PC-3 (cell line): ENCODE measurements at regions of chr15 and their contacts with region 1.

Region 1: GRCh38 chr15:44102675-44103254 is 92.3 kb downstream of the FRMD5 start:
- DNase-seq: peak; percentile 99
- ATAC-seq: peak; percentile 93
- H3K4me3 ChIP-seq: peak overlapping the region; percentile 39; the same call in 1 of the 2 replicates
- H3K27ac ChIP-seq: peak overlapping the region; percentile 96
- H3K4me1 ChIP-seq: peaks cover 35% of the 10 kb centered on the region
- H3K27me3 ChIP-seq: no peaks in the 10 kb centered on the region
- CTCF ChIP-seq: no peak

Region 2: GRCh38 chr15:44066316-44066740 is 36.4 kb before region 1 on chr15:
- CTCF ChIA-PET with region 1: interaction called, 3 read pairs
- POLR2A ChIA-PET with region 1: no interaction called
- intact Hi-C with region 1: loop called (anchors 2 kb)
- DNase-seq: peak; percentile 86
- ATAC-seq: peak; percentile 62
- H3K4me3 ChIP-seq: peak overlapping the region; percentile 7; the same call in 1 of the 2 replicates
- H3K27ac ChIP-seq: no peak overlapping the region
- H3K4me1 ChIP-seq: peaks cover 14% of the 10 kb centered on the region; the same call in 1 of the 2 replicates
- H3K27me3 ChIP-seq: no peaks in the 10 kb centered on the region
- CTCF ChIP-seq: peak; percentile 98

Region 3: DNA sequence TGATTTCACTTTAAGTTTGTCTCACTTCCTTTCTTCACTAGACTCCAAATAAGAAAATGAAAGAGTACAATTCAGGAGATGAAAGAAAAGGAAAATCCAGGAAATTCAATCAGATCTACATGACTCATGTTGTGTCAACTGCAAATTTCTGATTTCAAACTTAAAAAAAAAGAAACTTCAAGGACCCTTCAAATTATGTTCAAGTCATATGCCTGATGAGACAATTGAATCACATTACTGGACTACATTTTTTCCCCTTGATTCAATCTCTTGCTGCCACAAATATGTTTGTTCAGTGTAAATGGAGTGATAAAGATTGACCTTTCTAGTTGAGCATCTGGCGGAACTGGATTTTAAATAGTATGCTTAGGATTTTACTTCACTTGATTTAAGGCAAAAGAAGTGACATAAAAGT is 54.9 kb after region 1 on chr15:
- CTCF ChIA-PET with region 1: no interaction called
- POLR2A ChIA-PET with region 1: no interaction called
- intact Hi-C with region 1: loop called (anchors 5 kb)
- DNase-seq: peak; percentile 97
- ATAC-seq: peak; percentile 90
- H3K4me3 ChIP-seq: peak overlapping the region; percentile 49; the same call in 1 of the 2 replicates
- H3K27ac ChIP-seq: peak overlapping the region; percentile 93
- H3K4me1 ChIP-seq: peaks cover 39% of the 10 kb centered on the region
- H3K27me3 ChIP-seq: no peaks in the 10 kb centered on the region
- CTCF ChIP-seq: no peak

Region 4: GRCh38 chr15:44195151-44195740 is 92.5 kb after region 1 on chr15 and contains the start of gene FRMD5:
- CTCF ChIA-PET with region 1: interaction called, 3 read pairs
- POLR2A ChIA-PET with region 1: no interaction called
- intact Hi-C with region 1: loop called (anchors 2 kb)
- DNase-seq: peak; percentile 98
- ATAC-seq: peak; percentile 84
- H3K4me3 ChIP-seq: peak within 1 kb of the TSS; percentile 81
- H3K27ac ChIP-seq: peak within 1 kb of the TSS; percentile 51
- H3K4me1 ChIP-seq: peaks cover 30% of the 10 kb centered on the region
- H3K27me3 ChIP-seq: no peaks in the 10 kb centered on the region
- CTCF ChIP-seq: peak; percentile 37; the same call in 1 of the 2 replicates
- total RNA-seq, gene FRMD5: 8.7 and 12.2 TPM in 2 replicates

Region 5: GRCh38 chr15:44286814-44287452 is 184.2 kb after region 1 on chr15:
- CTCF ChIA-PET with region 1: no interaction called
- POLR2A ChIA-PET with region 1: no interaction called
- intact Hi-C with region 1: loop called (anchors 1 kb)
- DNase-seq: peak; percentile 22
- ATAC-seq: no peak
- H3K4me3 ChIP-seq: peak overlapping the region; percentile 87
- H3K27ac ChIP-seq: no peak overlapping the region
- H3K4me1 ChIP-seq: peaks cover 16% of the 10 kb centered on the region
- H3K27me3 ChIP-seq: no peaks in the 10 kb centered on the region
- CTCF ChIP-seq: no peak

Region 6: GRCh38 chr15:44325568-44325967 is 222.8 kb after region 1 on chr15:
- CTCF ChIA-PET with region 1: no interaction called
- POLR2A ChIA-PET with region 1: no interaction called
- intact Hi-C with region 1: no loop called
- DNase-seq: no peak
- ATAC-seq: no peak
- H3K4me3 ChIP-seq: no peak overlapping the region
- H3K27ac ChIP-seq: no peak overlapping the region
- H3K4me1 ChIP-seq: no peaks in the 10 kb centered on the region
- H3K27me3 ChIP-seq: no peaks in the 10 kb centered on the region
- CTCF ChIP-seq: no peak

Region 7: GRCh38 chr15:44340410-44340809 is 237.6 kb after region 1 on chr15:
- CTCF ChIA-PET with region 1: no interaction called
- POLR2A ChIA-PET with region 1: no interaction called
- intact Hi-C with region 1: no loop called
- DNase-seq: peak; percentile 95
- ATAC-seq: peak; percentile 100
- H3K4me3 ChIP-seq: no peak overlapping the region
- H3K27ac ChIP-seq: no peak overlapping the region
- H3K4me1 ChIP-seq: peaks cover 11% of the 10 kb centered on the region
- H3K27me3 ChIP-seq: no peaks in the 10 kb centered on the region
- CTCF ChIP-seq: no peak